WTC11 (cell line): ENCODE measurements at regions of chr16 and their contacts with region 1.

Region 1: DNA sequence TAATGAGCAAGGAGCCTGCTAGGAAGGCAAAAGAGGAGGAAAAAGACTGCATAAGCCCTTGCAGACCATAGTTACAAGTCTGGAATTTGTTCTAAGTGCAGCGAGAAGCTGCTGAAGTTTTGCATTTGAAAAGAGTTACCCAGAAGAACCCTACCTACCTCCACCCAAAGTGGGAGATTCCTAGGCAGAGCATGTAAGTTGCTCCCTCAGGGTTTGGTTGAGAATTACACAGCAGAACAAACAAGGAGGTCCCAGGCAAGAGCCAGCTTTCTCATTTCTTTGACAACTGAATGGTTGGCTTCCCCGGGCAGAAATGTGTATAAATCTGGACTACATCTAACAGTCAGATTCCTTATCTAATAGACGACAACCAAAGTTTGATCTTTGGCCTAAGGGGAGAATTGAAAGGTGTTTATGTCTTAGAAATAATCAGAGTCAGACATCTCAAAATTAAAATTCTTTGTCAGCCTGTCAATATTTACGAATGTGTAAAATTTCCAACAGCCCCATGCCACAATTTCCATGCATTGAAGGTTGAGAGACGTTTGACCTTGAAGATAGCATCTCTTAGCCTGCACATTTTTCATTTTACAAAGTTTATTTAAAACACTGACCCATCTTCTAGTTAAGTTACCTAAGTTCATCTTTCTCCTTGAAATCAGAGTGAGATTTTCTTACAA is 118.5 kb upstream of the NUDT7 start:
- DNase-seq: no peak
- ATAC-seq: peak; percentile 64
- H3K4me3 Mint-ChIP-seq: no peak overlapping the region
- H3K27ac Mint-ChIP-seq: no peak overlapping the region
- H3K4me1 Mint-ChIP-seq: peaks cover 17% of the 10 kb centered on the region
- H3K27me3 Mint-ChIP-seq: peaks cover 2% of the 10 kb centered on the region; the same call in 1 of the 2 replicates
- CTCF ChIP-seq: no peak

Region 2: GRCh38 chr16:77660311-77660710 is 56.5 kb after region 1 on chr16:
- CTCF ChIA-PET with region 1: interaction called, 11 read pairs
- POLR2A ChIA-PET with region 1: no interaction called
- DNase-seq: no peak
- ATAC-seq: peak; percentile 51
- H3K4me3 Mint-ChIP-seq: no peak overlapping the region
- H3K27ac Mint-ChIP-seq: no peak overlapping the region
- H3K4me1 Mint-ChIP-seq: peaks cover 14% of the 10 kb centered on the region
- H3K27me3 Mint-ChIP-seq: no peaks in the 10 kb centered on the region; the same call in 1 of the 2 replicates
- CTCF ChIP-seq: no peak